ENCODE measurements at regions of chr7 and their contacts with region 1.

Region 1: GRCh38 chr7:47513741-47514241 is 68.1 kb downstream of the TNS3 start:
- DNase-seq: peak; percentile 26
- H3K4me3 ChIP-seq: no peak overlapping the region
- H3K27ac ChIP-seq: no peak overlapping the region
- H3K4me1 ChIP-seq: peaks cover 5% of the 10 kb centered on the region
- H3K27me3 ChIP-seq: no peaks in the 10 kb centered on the region
- CTCF ChIP-seq: no peak
- POLR2A ChIP-seq: no peak

Region 2: DNA sequence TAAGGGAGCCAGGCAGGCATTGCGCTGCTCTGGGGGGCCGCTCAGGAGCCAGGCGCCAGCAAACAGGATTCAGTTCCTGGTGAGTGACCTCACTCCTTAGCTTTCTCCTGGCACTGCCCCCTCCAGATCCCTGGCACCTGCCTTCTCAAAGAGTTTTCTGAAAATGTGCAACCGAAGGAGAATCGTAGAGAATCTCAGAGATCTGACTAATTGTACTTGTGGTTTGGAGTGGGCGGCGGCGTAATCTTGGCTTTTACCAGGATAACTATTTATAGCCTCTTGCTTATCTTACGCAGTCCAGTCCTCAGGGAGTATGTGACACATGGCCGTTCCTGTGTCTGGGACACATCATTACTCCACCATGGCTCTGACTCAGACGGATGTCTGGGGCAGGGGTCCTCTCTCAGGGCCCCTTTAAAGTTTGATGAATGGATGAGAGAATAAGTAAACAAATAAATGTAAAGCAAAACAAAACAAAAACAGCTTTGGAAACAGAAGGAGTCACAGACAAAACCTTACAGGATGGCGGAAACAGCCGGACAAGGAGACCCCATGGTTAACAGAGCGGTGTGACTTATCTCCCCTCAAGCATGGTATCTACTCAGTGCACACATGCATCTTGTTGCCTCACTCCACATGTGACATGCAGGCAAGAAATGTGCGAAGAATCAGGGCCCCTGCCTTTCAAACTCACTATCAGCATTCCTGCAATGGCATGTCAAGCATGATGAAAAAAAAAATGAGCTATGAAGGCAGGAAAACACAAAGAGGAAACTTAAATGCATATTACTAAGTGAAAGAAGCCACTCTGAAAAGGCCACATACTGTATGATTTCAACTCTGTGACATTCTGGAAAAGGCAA is 31.5 kb before region 1 on chr7:
- intact Hi-C with region 1: no loop called
- DNase-seq: no peak
- H3K4me3 ChIP-seq: no peak overlapping the region
- H3K27ac ChIP-seq: no peak overlapping the region
- H3K4me1 ChIP-seq: no peaks in the 10 kb centered on the region
- H3K27me3 ChIP-seq: no peaks in the 10 kb centered on the region
- CTCF ChIP-seq: no peak
- POLR2A ChIP-seq: no peak

Region 3: DNA sequence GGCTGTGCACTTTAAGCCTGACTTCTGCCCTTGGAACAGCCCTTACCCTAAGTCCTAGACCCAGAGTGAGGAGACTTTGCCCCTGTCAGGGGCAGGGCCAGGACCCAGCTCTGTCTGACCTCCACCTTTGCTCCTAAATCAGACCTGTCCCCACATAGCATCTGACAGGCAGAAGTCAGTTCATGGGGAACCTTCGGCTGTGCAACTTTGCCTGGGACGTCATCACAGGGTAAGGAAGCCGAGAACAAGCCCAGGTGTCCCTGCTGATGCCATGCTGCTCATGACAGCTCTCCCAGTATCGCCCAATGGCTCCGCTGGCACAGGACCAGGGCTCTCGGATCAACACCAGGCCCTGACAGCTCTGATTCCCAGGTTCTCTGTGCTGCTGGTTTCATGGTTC is 12.7 kb after region 1 on chr7:
- intact Hi-C with region 1: no loop called
- DNase-seq: no peak
- H3K4me3 ChIP-seq: no peak overlapping the region
- H3K27ac ChIP-seq: no peak overlapping the region
- H3K4me1 ChIP-seq: no peaks in the 10 kb centered on the region
- H3K27me3 ChIP-seq: no peaks in the 10 kb centered on the region
- CTCF ChIP-seq: no peak
- POLR2A ChIP-seq: no peak

Region 4: GRCh38 chr7:47786557-47787248 is 272.9 kb after region 1 on chr7:
- intact Hi-C with region 1: loop called (anchors 10 kb)
- DNase-seq: peak; percentile 35
- H3K4me3 ChIP-seq: no peak overlapping the region
- H3K27ac ChIP-seq: no peak overlapping the region
- H3K4me1 ChIP-seq: no peaks in the 10 kb centered on the region
- H3K27me3 ChIP-seq: no peaks in the 10 kb centered on the region
- CTCF ChIP-seq: no peak
- POLR2A ChIP-seq: no peak

Measured in prostate gland (tissue), 2 donors.